ENCODE measurements at regions of chr20 and their contacts with region 1.

Region 1: DNA sequence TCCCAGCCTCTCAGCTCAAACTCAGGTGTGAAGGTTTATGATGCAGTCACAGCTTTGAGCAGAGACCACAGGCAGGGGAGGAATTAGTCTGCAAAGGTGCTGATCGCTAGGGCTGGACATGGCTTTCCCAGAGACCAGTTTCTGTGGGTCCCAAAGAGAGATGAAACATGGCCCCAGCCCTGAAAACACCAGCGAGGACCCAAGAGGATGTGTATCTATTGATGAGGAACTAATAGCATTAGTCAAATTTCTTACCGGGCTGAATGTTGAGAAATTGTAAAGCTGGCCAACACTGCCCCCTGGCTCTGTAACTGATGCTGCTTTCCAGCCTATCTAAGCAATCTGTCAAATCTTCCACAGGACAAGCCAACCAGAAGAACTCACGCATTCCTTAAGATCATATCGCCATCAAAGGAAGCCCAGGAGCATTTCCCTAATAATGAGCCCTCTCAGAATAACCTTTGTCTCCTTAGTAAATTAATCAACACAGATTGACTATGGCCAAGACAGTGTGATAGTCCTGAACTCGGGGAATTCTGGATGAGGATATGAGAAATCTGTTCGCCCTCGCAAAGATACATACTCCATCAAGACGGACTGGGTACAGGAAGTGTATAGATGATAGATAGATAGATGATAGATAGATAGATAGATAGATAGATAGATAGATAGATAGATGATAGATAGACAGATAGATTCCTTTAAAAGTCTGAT is 7.8 kb upstream of the ACSS1 start:
- DNase-seq: peak in 1 of 2 experiments; percentile 62
- H3K4me3 ChIP-seq: no peak overlapping the region
- H3K27ac ChIP-seq: no peak overlapping the region
- H3K4me1 ChIP-seq: no peaks in the 10 kb centered on the region; a peak in 1 of 7 replicates
- H3K27me3 ChIP-seq: peaks cover 0 to 23% (median 12%) of the 10 kb centered on the region in 4 experiments; a peak in 5 of 7 replicates
- CTCF ChIP-seq: peak; percentile 16 to 79 (median 78)
- EP300 ChIP-seq: no peak
- POLR2A ChIP-seq: no peak
- RAD21 ChIP-seq: peak; percentile 93 to 94

Region 2: GRCh38 chr20:24992487-24993205 is 73.1 kb before region 1 on chr20 and contains the start of gene APMAP:
- CTCF ChIA-PET with region 1: interaction called, 121 read pairs
- POLR2A ChIA-PET with region 1: interaction called, 8 read pairs
- DNase-seq: peak; percentile 46 to 95
- H3K4me3 ChIP-seq: peak within 1 kb of the TSS; percentile 75 to 86 (median 84)
- H3K27ac ChIP-seq: no peak within 1 kb of the TSS
- H3K4me1 ChIP-seq: peaks cover 0 to 7% (median 0%) of the 10 kb centered on the region in 4 experiments; a peak in 1 of 7 replicates
- H3K27me3 ChIP-seq: no peaks in the 10 kb centered on the region; a peak in 1 of 7 replicates
- CTCF ChIP-seq: no peak
- EP300 ChIP-seq: no peak
- POLR2A ChIP-seq: peak; percentile 48 to 79; a peak in 2 of 3 replicates
- RAD21 ChIP-seq: no peak
- total RNA-seq, gene APMAP: 63.6 and 66.0 TPM in 2 replicates

Region 3: DNA sequence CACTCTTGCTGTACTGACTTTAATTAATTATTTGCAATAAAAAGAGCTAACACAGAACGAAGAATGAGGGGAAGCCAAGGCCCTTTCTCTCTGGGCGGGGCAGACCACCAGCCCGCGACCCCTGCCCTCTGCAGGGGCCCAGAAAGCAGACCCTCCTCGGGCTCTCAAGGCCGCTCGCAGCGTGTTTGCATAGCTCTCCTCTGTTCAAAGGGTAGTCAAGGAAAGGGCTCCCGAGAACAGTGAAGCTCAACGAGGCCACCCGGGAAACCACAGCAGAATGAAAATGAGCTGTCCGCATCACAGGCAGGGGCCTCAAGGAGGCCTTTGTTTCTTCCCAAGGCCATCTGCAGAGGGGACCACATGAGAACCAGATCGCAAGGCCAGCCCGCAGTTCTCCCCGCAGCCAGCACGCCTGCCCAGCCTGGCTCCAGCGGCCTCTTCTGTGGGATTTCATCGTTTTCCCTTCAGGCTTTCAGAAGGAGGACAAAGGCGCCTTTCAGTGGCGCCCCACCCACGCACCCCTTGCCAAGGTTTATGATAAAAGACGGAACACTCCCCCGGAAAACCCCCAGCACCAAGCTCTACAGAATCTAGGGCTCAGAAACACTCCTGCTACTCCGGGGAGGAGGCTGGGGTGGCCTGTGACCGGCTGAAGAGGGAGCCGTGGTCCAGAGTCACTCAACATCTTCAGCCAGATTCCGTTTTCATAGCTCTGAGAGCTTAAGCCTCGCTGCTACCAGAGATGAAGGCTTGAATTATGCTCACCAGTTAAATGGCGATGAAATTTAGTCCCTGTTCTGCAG is 33.1 kb before region 1 on chr20:
- CTCF ChIA-PET with region 1: interaction called, 13 read pairs
- POLR2A ChIA-PET with region 1: interaction called, 4 read pairs
- DNase-seq: no peak
- H3K4me3 ChIP-seq: no peak overlapping the region
- H3K27ac ChIP-seq: no peak overlapping the region
- H3K4me1 ChIP-seq: peaks cover 0 to 5% (median 1%) of the 10 kb centered on the region in 4 experiments; a peak in 3 of 7 replicates
- H3K27me3 ChIP-seq: no peaks in the 10 kb centered on the region; a peak in 1 of 7 replicates
- CTCF ChIP-seq: no peak
- EP300 ChIP-seq: no peak
- POLR2A ChIP-seq: no peak
- RAD21 ChIP-seq: no peak

Region 4: GRCh38 chr20:25044660-25045342 is 21.0 kb before region 1 on chr20:
- CTCF ChIA-PET with region 1: interaction called, 13 read pairs
- POLR2A ChIA-PET with region 1: interaction called, 4 read pairs
- DNase-seq: no peak
- H3K4me3 ChIP-seq: no peak overlapping the region
- H3K27ac ChIP-seq: no peak overlapping the region
- H3K4me1 ChIP-seq: no peaks in the 10 kb centered on the region; a peak in 1 of 7 replicates
- H3K27me3 ChIP-seq: no peaks in the 10 kb centered on the region; a peak in 1 of 7 replicates
- CTCF ChIP-seq: no peak
- EP300 ChIP-seq: no peak
- POLR2A ChIP-seq: no peak
- RAD21 ChIP-seq: no peak

Region 5: DNA sequence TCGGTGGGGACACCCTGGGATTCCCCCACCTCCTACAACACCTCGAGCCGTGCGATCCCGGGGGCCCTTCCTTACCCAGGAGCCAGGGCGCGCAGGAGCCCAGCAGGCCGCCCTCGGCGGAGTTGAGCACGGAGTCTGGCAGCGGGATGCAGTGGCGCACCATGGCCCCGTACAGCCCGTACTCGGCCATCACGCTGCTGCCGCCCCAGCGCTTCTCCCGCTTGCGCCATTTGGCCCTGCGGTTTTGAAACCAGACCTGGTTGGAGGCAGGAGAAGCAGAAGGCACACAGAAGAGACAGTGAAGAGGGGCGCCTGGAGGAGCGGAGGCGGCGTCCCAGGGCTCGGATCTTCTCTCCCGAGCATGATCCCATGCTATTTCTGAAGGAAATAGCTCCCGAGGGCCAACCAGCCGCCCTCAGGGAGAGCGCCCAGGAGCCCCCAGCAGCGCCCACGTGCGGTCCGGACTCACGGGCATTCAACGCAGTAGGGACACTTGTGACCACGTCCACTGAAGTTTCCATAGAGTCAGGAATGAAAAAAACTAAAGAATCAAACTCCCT is 11.9 kb after region 1 on chr20:
- CTCF ChIA-PET with region 1: interaction called, 12 read pairs
- POLR2A ChIA-PET with region 1: no interaction called
- DNase-seq: peak in 1 of 2 experiments; percentile 47
- H3K4me3 ChIP-seq: peak overlapping the region; percentile 15 to 51 (median 24); a peak in 7 of 8 replicates
- H3K27ac ChIP-seq: no peak overlapping the region
- H3K4me1 ChIP-seq: peaks cover 0 to 3% (median 0%) of the 10 kb centered on the region in 4 experiments; a peak in 2 of 7 replicates
- H3K27me3 ChIP-seq: peaks cover 29 to 60% (median 55%) of the 10 kb centered on the region in 4 experiments
- CTCF ChIP-seq: no peak
- EP300 ChIP-seq: no peak
- POLR2A ChIP-seq: no peak
- RAD21 ChIP-seq: no peak

Measured in H1 (cell line).